Aorta (tissue), 5 donors: ENCODE measurements at regions of chr3 and their contacts with region 1.

Region 1: DNA sequence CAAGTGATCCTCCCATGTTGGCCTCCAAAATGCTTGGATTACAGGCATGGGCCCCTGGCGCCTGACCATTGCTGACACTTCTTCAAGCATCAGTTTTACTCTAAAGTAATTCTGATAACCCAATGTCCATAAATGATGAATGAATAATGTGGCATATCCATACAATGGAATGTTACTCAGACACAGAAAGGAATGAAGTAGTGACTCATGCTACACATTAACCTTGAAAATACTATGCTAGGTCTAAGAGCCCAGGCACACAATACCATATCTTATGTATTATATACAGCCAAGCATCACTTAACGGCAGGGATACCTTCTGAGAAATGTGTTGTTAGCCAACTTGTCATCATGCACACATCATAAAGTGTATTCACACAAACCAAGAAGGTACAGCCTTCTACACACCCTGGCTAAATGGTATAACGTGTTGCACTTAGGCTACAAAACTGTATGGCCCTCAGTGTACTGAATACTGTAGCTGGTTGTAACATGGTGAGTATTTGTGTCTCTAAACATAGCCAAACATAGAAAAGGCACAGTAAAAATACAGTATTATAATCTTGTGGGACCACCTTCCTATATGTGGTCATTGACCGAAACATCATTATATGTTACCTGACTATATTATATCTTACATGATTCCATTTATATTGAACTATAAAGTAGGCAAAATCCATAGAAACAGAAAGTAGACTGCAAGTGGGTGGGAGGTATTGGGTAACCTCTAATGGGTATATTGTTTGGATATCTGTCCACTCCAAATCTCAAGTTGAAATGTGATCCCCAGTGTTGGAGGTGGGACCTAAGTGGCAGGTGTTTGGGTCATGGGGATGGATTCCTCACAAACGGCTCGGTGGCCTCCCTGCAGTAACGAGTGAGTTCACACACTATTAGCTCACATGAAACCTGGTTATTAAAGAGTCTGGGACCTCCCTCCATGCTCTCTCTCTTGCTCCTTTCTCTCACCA is 31.4 kb downstream of the MKRN2 start:
- DNase-seq: no peak
- ATAC-seq: no peak
- H3K4me3 ChIP-seq: no peak overlapping the region
- H3K27ac ChIP-seq: no peak overlapping the region
- H3K4me1 ChIP-seq: no peaks in the 10 kb centered on the region
- H3K27me3 ChIP-seq: no peaks in the 10 kb centered on the region

Region 2: DNA sequence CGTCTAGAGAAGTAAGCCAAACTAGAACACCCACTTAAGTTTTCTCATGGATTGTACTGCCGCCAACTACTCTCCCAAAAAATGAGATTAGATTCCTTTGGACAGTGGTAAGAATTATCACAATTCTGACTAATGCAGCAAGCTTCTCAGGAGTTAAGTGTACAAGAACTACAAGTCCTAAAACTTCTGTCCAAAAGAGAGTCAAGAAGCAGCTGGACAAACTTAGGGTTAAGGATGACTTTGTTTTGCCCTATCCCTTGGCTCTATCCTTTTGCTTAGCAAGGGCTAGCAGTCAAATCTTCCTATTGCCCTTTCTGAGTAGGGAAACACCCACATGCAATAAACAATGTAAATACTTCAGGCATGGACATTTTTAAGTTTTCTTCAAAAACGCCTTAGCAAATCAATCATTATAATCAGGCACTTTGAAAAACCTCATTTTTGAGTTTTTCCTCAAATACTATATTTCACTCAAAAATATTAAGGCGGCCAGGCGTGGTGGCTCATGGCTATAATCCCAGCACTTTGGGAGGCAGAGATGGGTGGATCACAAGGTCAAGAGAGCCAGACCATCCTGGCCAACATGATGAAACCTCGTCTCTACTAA is 56.1 kb after region 1 on chr3:
- intact Hi-C with region 1: loop called in 1 of 2 experiments (anchors 5 kb)
- DNase-seq: no peak
- ATAC-seq: peak; percentile 41
- H3K4me3 ChIP-seq: peak overlapping the region in 1 of 2 donors; percentile 48
- H3K27ac ChIP-seq: peak overlapping the region; percentile 67 to 68
- H3K4me1 ChIP-seq: peaks cover 1 to 4% of the 10 kb centered on the region in 2 donors
- H3K27me3 ChIP-seq: no peaks in the 10 kb centered on the region

Region 3: GRCh38 chr3:12719984-12720898 is 131.9 kb after region 1 on chr3:
- intact Hi-C with region 1: loop called in 1 of 2 experiments (anchors 10 kb)
- DNase-seq: peak; percentile 83
- ATAC-seq: peak; percentile 96
- H3K4me3 ChIP-seq: peak overlapping the region in 1 of 2 donors; percentile 38
- H3K27ac ChIP-seq: no peak overlapping the region
- H3K4me1 ChIP-seq: no peaks in the 10 kb centered on the region
- H3K27me3 ChIP-seq: no peaks in the 10 kb centered on the region